ENCODE measurements at regions of chr4 and their contacts with region 1.

Region 1: GRCh38 chr4:173168396-173169177 is at the start of gene GALNT7:
- DNase-seq: peak; percentile 76
- H3K4me3 ChIP-seq: peak within 1 kb of the TSS; percentile 84 to 87
- H3K27ac ChIP-seq: peak within 1 kb of the TSS; percentile 84 to 90
- H3K4me1 ChIP-seq: no peaks in the 10 kb centered on the region
- H3K27me3 ChIP-seq: no peaks in the 10 kb centered on the region
- CTCF ChIP-seq: peak in 1 of 4 experiments; percentile 5
- POLR2A ChIP-seq: no peak
- total RNA-seq, gene GALNT7: 45.5 to 109 TPM

Region 2: DNA sequence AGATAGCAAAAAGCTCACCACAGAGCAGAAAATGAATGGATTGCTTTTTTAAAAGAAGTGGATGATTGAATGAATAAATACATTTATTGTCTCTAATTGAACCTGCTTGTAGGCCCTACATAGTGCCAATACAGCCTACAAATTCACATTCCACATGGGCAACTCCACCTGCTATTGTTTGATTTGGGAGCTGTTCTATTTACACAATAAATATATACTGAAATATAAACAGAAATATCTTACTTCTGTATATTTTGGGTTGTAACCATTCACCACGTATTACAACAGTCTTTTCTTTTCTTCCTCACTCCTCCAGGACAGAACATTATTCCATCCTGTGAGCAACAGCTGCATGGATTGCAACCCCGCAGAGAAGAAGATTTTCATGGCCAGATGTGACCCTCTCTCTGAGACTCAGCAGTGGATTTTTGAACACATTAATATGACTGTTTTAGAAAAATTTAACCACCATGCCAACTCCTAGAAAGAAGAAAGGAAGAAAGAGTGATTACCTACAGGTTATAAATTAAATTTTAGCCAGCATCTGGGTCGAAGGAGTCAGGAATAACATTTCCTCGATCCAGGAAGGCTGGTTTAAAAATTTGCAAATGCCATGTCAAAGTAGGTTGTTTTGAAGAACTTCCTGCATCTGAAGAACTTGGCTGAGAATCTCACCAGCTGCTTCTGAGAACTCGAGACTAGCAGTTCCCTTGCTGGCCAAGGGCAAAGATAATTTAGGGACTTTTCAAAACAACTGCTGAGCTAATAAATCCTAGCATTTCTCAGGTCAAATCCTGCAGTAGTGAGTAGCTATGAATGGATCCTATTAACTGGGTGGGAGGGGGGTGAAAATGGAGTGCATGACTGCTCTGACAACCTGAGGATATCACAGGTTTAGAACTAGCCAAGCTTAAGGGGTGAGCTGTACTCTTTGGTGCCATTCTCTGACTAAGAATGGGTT is 128.7 kb before region 1 on chr4:
- intact Hi-C with region 1: loop called (anchors 5 kb)
- DNase-seq: no peak
- H3K4me3 ChIP-seq: peak overlapping the region in 1 of 2 donors; percentile 3
- H3K27ac ChIP-seq: peak overlapping the region; percentile 16 to 23
- H3K4me1 ChIP-seq: peaks cover 11% of the 10 kb centered on the region
- H3K27me3 ChIP-seq: no peaks in the 10 kb centered on the region
- CTCF ChIP-seq: no peak
- POLR2A ChIP-seq: no peak

Region 3: DNA sequence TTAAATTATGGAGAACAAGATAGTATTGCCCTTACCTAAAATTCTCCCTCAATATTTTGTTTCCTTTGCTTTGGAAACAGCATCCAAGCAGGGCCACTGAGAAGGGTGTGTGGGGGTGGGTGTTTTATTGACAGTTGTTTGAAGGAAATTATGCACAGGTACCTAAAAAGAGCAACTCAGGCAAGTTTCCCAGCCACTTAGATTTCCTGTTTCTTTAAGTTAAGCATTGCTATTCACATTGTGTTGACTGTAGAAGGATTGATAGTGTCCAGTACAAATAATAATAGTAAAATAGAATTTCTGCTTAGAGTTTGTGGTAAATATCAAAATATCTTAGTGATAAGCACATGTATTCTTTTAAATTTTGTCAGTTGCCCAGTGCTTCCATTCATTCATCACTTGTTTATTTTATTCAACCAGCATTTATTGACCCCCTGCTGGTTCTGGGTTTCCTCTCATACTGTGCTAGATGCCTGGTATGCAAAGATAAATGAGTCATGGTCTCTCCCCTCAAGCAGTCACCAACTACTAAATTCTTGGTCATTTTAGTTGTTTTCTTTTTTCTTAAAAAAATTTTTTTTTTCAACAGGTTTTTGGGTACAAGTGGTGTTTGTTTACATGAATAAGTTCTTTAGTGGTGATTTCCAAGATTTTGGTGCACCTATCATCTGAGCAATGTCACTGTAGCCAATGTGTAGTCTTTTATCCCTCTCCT is 50.0 kb after region 1 on chr4:
- intact Hi-C with region 1: no loop called
- DNase-seq: no peak
- H3K4me3 ChIP-seq: no peak overlapping the region
- H3K27ac ChIP-seq: no peak overlapping the region
- H3K4me1 ChIP-seq: peaks cover 3% of the 10 kb centered on the region
- H3K27me3 ChIP-seq: no peaks in the 10 kb centered on the region
- CTCF ChIP-seq: no peak
- POLR2A ChIP-seq: no peak

Region 4: GRCh38 chr4:173257732-173258717 is 89.4 kb after region 1 on chr4:
- intact Hi-C with region 1: loop called (anchors 10 kb)
- DNase-seq: peak; percentile 50
- H3K4me3 ChIP-seq: no peak overlapping the region
- H3K27ac ChIP-seq: no peak overlapping the region
- H3K4me1 ChIP-seq: no peaks in the 10 kb centered on the region
- H3K27me3 ChIP-seq: no peaks in the 10 kb centered on the region
- CTCF ChIP-seq: peak in 3 of 4 experiments; percentile 45 to 67 (median 64)
- POLR2A ChIP-seq: no peak

Measured in prostate gland (tissue), 2 donors.